MCF 10A (cell line): ENCODE measurements at regions of chr18 and their contacts with region 1.

Region 1: DNA sequence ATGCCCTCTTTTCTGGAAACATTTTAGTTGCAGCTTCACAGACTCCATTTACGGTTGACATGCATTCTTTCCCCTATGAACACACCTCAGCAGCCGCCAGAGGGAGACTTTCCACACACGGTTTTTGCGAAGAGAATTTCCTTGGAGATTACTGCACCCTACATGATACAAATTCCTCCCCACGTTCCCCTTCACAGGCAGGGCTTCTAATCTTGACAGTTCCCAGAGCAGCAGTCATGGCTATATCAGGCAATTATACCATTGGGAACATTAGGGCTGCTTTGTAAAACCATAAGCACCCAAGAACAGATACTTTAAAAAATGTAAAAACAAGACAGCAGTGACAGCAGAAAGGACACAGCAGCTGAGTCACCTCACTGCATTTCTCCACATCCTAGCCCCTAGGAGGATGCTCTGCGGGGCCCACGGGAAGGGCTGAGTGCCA is 253.8 kb downstream of the TGIF1 start:
- DNase-seq: peak; percentile 66
- H3K4me3 Mint-ChIP-seq: no peak overlapping the region
- H3K27ac Mint-ChIP-seq: no peak overlapping the region
- H3K4me1 Mint-ChIP-seq: peaks cover 9% of the 10 kb centered on the region
- H3K27me3 Mint-ChIP-seq: no peaks in the 10 kb centered on the region
- CTCF ChIP-seq: peak; percentile 61

Region 2: DNA sequence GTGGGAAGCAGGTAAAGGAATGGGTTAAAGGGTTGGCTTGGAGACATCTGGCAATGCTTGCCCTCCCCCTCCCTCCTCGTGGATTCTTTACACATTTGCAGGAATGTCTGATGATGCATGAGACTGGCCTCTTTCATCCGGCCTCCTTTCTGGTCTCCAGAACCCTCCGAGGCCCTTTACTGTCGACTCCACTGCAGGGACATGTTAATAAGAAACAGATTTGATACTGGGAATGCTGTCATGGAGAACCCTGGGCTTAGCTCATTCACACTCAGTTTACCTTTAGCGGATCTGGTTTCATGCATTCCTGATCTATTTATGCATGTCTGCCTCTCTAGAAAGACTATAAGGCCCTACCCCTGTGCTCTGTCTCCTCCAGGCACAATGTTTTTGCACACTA is 15.1 kb before region 1 on chr18:
- CTCF ChIA-PET with region 1: interaction called, 13 read pairs
- POLR2A ChIA-PET with region 1: interaction called, 3 read pairs
- intact Hi-C with region 1: no loop called
- DNase-seq: peak; percentile 31
- H3K4me3 Mint-ChIP-seq: no peak overlapping the region
- H3K27ac Mint-ChIP-seq: no peak overlapping the region
- H3K4me1 Mint-ChIP-seq: peaks cover 9% of the 10 kb centered on the region
- H3K27me3 Mint-ChIP-seq: no peaks in the 10 kb centered on the region
- CTCF ChIP-seq: no peak

Region 3: DNA sequence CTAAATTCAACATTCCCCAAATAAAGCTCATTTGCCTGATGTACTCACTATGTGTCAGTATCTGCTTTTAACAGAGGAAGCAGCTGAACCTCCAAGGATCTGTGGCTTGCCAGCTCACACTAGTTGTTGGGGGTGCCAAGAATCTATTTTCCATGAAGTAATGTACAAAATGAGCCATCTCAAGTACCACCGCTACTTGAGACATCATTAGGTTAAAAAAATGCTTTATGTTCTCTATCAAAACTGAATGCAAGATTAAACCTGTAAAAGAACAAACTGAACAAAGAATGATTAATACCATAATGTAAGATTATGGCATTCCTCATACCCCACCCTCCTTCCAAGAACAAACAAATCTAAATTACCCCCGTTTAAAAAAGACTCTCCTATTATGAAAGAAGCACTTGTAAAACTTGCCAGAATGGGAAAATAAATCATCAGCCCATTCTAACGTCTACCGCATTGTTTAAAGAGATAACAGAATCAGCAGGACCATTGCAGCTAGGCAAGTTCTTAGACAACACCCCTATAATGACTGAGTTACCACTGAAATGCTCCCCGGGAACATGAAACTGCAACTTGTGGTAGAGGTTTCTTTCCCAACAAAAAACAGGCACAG is 279.7 kb after region 1 on chr18:
- CTCF ChIA-PET with region 1: interaction called, 15 read pairs
- POLR2A ChIA-PET with region 1: no interaction called
- intact Hi-C with region 1: no loop called
- DNase-seq: peak; percentile 59
- H3K4me3 Mint-ChIP-seq: no peak overlapping the region
- H3K27ac Mint-ChIP-seq: peak overlapping the region; percentile 14
- H3K4me1 Mint-ChIP-seq: peaks cover 21% of the 10 kb centered on the region
- H3K27me3 Mint-ChIP-seq: no peaks in the 10 kb centered on the region
- CTCF ChIP-seq: no peak